GM10248 (cell line): ENCODE measurements at regions of chr15 and their contacts with region 1.

Region 1: DNA sequence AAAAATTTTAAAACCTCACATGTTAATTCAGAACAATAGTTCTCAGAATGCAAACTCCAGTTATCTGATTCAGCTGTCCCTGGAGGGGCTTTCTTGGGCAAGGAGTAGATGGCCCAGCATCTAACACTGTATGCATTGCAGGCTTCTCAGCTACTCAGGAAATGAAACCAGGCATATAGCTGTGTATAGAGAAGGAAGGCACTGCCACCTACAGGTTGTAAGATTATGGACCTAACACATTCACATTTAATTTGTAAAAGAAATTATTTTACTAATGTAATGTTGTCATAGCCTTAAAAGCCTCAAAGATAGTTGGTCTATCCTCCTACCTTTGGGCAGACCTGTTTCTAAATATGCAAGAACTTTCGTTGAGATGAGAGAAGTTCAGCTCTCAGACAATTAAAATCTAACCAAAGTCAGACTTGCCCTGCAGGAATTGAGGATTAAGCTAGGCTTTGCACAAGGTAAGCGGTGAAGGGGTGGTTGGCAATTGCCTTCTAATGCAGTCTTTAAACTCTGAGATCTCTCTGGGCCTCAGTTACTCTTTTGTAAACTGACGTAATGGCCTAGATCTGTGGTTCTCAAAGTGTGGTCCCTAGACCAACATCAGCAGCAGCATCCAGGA is 132.8 kb upstream of the SLC24A5 start:
- DNase-seq: peak; percentile 48
- CTCF ChIP-seq: peak; percentile 61

Region 2: GRCh38 chr15:47196057-47196456 is 792.0 kb before region 1 on chr15:
- CTCF ChIA-PET with region 1: interaction called, 53 read pairs
- POLR2A ChIA-PET with region 1: no interaction called
- DNase-seq: peak; percentile 37
- CTCF ChIP-seq: peak; percentile 92

Region 3: GRCh38 chr15:47711654-47712053 is 276.4 kb before region 1 on chr15:
- CTCF ChIA-PET with region 1: interaction called, 66 read pairs
- POLR2A ChIA-PET with region 1: no interaction called
- DNase-seq: peak; percentile 37
- CTCF ChIP-seq: peak; percentile 52

Region 4: GRCh38 chr15:47961401-47962090 is 26.5 kb before region 1 on chr15:
- CTCF ChIA-PET with region 1: interaction called, 10 read pairs
- POLR2A ChIA-PET with region 1: no interaction called
- DNase-seq: peak; percentile 53
- CTCF ChIP-seq: no peak

Region 5: GRCh38 chr15:47998619-47999019 is 10.6 kb after region 1 on chr15:
- CTCF ChIA-PET with region 1: interaction called, 23 read pairs
- POLR2A ChIA-PET with region 1: no interaction called
- DNase-seq: no peak
- CTCF ChIP-seq: no peak